CD14-positive monocyte (primary cell): ENCODE measurements at regions of chr2 and their contacts with region 1.

Region 1: GRCh38 chr2:118056165-118056534 is 32.1 kb upstream of the INSIG2 start:
- DNase-seq: peak; percentile 82 to 86 (median 83)
- H3K4me3 ChIP-seq: peak overlapping the region in 1 of 3 experiments; percentile 45
- H3K4me3 Mint-ChIP-seq: peak overlapping the region in 1 of 2 donors; percentile 65
- H3K27ac ChIP-seq: peak overlapping the region; percentile 89 to 90
- H3K27ac Mint-ChIP-seq: peak overlapping the region; percentile 90 to 98 (median 96)
- H3K4me1 ChIP-seq: peaks cover 69 to 73% of the 10 kb centered on the region in 2 donors
- H3K4me1 Mint-ChIP-seq: peaks cover 68% of the 10 kb centered on the region
- H3K27me3 ChIP-seq: no peaks in the 10 kb centered on the region
- H3K27me3 Mint-ChIP-seq: peaks cover 0 to 2% (median 0%) of the 10 kb centered on the region in 3 donors
- CTCF ChIP-seq: no peak

Region 2: GRCh38 chr2:117902933-117903332 is 153.2 kb before region 1 on chr2:
- intact Hi-C with region 1: no loop called
- DNase-seq: no peak
- H3K4me3 ChIP-seq: no peak overlapping the region
- H3K4me3 Mint-ChIP-seq: no peak overlapping the region
- H3K27ac ChIP-seq: no peak overlapping the region
- H3K27ac Mint-ChIP-seq: no peak overlapping the region
- H3K4me1 ChIP-seq: no peaks in the 10 kb centered on the region
- H3K4me1 Mint-ChIP-seq: no peaks in the 10 kb centered on the region
- H3K27me3 ChIP-seq: no peaks in the 10 kb centered on the region
- H3K27me3 Mint-ChIP-seq: peaks cover 0 to 2% (median 0%) of the 10 kb centered on the region in 3 donors
- CTCF ChIP-seq: no peak

Region 3: DNA sequence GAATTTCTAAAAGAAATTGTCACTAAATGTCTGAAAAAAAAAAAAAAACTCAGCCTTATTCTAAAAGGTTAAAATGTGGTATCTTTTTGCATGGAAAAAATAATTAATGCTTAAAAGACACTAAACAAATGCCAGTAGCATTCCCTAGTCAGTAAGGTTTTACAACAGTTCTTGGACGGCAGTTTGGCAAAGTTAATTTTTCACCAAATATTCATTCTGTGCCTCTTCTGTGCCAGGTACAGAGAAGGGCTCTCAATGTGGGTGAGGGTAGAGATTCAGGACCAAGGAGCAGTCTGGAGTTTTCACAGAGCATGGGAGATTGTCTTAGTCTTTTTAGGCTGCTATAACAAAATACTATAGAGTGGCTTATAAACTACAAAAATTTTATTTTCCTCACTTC is 36.3 kb before region 1 on chr2:
- intact Hi-C with region 1: loop called (anchors 5 kb)
- DNase-seq: no peak
- H3K4me3 ChIP-seq: no peak overlapping the region
- H3K4me3 Mint-ChIP-seq: no peak overlapping the region
- H3K27ac ChIP-seq: no peak overlapping the region
- H3K27ac Mint-ChIP-seq: peak overlapping the region in 1 of 7 donors; percentile 3
- H3K4me1 ChIP-seq: peaks cover 24 to 33% of the 10 kb centered on the region in 2 donors
- H3K4me1 Mint-ChIP-seq: peaks cover 33% of the 10 kb centered on the region
- H3K27me3 ChIP-seq: no peaks in the 10 kb centered on the region
- H3K27me3 Mint-ChIP-seq: peaks cover 4 to 12% (median 6%) of the 10 kb centered on the region in 3 donors
- CTCF ChIP-seq: no peak